ENCODE measurements at regions of chr3 and their contacts with region 1.

Region 1: GRCh38 chr3:119018690-119019463 is 15.8 kb downstream of the IGSF11 start:
- DNase-seq: no peak
- ATAC-seq: no peak
- H3K4me3 ChIP-seq: no peak overlapping the region
- H3K4me3 Mint-ChIP-seq: no peak overlapping the region
- H3K27ac ChIP-seq: no peak overlapping the region
- H3K27ac Mint-ChIP-seq: no peak overlapping the region
- H3K4me1 ChIP-seq: no peaks in the 10 kb centered on the region
- H3K4me1 Mint-ChIP-seq: peaks cover 0 to 16% (median 4%) of the 10 kb centered on the region in 7 donors
- H3K27me3 ChIP-seq: no peaks in the 10 kb centered on the region
- H3K27me3 Mint-ChIP-seq: peaks cover 0 to 6% (median 0%) of the 10 kb centered on the region in 5 donors

Region 2: DNA sequence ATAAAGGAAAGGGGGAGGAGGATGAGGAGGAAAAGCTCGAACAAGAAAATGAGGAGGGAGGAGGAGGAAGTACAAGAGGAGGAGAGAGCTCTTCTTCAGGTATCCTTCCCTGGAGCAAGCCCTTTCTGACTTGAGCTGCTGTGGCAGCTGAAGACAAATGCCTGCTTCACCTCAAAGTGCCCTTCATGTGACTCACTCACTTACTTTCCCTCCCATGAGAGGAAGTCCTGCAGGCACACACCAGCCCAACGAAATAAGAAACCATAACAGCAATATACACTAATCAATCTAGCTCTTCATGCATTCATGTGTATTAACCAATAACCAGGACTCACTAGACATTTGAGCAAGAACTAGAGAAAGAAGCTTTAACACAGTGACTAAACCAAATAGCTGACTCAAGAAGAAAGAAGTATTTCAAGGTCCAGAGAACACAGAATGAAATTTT is 236.1 kb before region 1 on chr3:
- CTCF ChIA-PET with region 1: no interaction called
- POLR2A ChIA-PET with region 1: no interaction called
- intact Hi-C with region 1: no loop called
- DNase-seq: no peak
- ATAC-seq: no peak
- H3K4me3 ChIP-seq: no peak overlapping the region
- H3K4me3 Mint-ChIP-seq: no peak overlapping the region
- H3K27ac ChIP-seq: no peak overlapping the region
- H3K27ac Mint-ChIP-seq: no peak overlapping the region
- H3K4me1 ChIP-seq: no peaks in the 10 kb centered on the region
- H3K4me1 Mint-ChIP-seq: no peaks in the 10 kb centered on the region
- H3K27me3 ChIP-seq: no peaks in the 10 kb centered on the region
- H3K27me3 Mint-ChIP-seq: peaks cover 2 to 21% (median 13%) of the 10 kb centered on the region in 5 donors

Region 3: DNA sequence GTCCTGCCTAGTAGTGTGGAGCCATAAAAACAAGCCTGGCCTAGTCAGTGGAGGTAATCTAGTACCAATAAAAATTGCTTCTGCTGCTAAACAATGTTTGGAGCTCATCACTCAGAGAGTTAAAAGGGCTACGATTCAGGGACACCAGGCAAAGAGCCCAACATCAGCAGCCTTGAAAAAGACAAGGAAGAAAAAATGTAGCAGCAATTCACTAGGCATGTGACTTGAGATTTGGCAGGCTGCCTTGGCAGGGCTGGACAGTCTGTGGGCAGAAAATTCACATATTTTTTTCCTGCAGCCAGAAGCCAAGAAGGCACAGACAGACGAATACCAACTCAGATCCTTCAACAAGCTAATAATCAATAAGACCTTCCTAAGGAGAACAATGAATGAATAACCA is 31.4 kb before region 1 on chr3:
- CTCF ChIA-PET with region 1: no interaction called
- POLR2A ChIA-PET with region 1: no interaction called
- intact Hi-C with region 1: loop called in 1 of 2 experiments (anchors 5 kb)
- DNase-seq: no peak
- ATAC-seq: no peak
- H3K4me3 ChIP-seq: no peak overlapping the region
- H3K4me3 Mint-ChIP-seq: no peak overlapping the region
- H3K27ac ChIP-seq: no peak overlapping the region
- H3K27ac Mint-ChIP-seq: no peak overlapping the region
- H3K4me1 ChIP-seq: no peaks in the 10 kb centered on the region
- H3K4me1 Mint-ChIP-seq: peaks cover 0 to 23% (median 4%) of the 10 kb centered on the region in 7 donors
- H3K27me3 ChIP-seq: no peaks in the 10 kb centered on the region
- H3K27me3 Mint-ChIP-seq: peaks cover 0 to 11% (median 0%) of the 10 kb centered on the region in 5 donors